Activated CD8-positive, alpha-beta T cell treated with anti-CD3 and anti-CD28 coated beads for 36 hours (primary cell): ENCODE measurements at regions of chrX and their contacts with region 1.

Region 1: GRCh38 chrX:47129157-47129898 is 15.2 kb downstream of the NDUFB11 start:
- DNase-seq: peak; percentile 93
- ATAC-seq: peak; percentile 99
- H3K4me3 Mint-ChIP-seq: peak overlapping the region; percentile 96
- H3K27ac Mint-ChIP-seq: peak overlapping the region; percentile 99
- H3K4me1 Mint-ChIP-seq: peaks cover 8% of the 10 kb centered on the region
- H3K27me3 Mint-ChIP-seq: no peaks in the 10 kb centered on the region
- CTCF ChIP-seq: no peak

Region 2: DNA sequence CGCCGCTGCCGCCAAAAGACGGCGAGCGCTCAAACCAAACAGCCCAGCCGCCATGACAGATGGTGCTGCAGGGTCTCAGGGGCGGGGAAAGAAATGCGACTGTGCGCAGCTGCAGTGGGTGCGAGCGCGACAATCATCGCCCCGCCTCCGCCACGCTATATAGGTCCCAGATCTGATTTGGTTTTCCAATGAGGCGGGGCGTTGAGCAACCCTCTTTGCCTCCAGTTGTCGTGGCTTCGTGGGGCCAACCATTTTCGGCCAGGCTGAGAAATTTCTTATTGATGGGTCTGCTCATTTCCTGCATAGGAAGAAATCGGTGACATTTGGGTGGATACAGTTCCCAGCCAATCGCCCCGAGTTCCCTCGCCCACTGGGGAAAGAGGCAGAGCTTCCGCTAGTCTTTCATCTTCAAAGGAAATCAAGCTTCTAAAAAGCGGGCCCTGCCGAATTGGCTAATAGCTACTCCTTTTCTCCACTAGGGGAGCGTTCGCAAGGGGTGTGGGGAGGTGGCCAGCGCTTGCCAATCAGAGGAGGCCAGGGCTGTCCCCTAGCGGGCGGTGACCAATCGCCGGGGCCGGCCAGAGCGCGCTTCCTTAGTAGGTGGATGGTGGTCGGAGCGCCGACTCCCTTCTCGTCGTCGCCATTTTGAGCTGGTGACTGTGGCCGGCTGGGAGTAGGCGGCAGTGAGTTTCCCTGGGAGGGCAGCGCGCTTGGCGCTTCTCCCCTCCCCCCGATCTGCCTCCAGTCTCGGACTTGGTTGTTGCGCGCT is 15.5 kb after region 1 on chrX and contains the starts of genes NDUFB11 and RBM10:
- CTCF ChIA-PET with region 1: interaction called, 11 read pairs
- POLR2A ChIA-PET with region 1: interaction called, 12 read pairs
- intact Hi-C with region 1: no loop called
- DNase-seq: peak; percentile 95
- ATAC-seq: peak; percentile 94
- H3K4me3 Mint-ChIP-seq: peak within 1 kb of the TSS; percentile 95
- H3K27ac Mint-ChIP-seq: peak within 1 kb of the TSS; percentile 99
- H3K4me1 Mint-ChIP-seq: peaks cover 28% of the 10 kb centered on the region
- H3K27me3 Mint-ChIP-seq: no peaks in the 10 kb centered on the region
- CTCF ChIP-seq: peak; percentile 56
- total RNA-seq, gene NDUFB11: 82.9 to 89.8 TPM
- total RNA-seq, gene RBM10: 66.4 to 66.7 TPM

Region 3: GRCh38 chrX:47200385-47201150 is 71.2 kb after region 1 on chrX:
- CTCF ChIA-PET with region 1: no interaction called
- POLR2A ChIA-PET with region 1: no interaction called
- intact Hi-C with region 1: no loop called
- DNase-seq: no peak
- ATAC-seq: no peak
- H3K4me3 Mint-ChIP-seq: no peak overlapping the region
- H3K27ac Mint-ChIP-seq: peak overlapping the region; percentile 70
- H3K4me1 Mint-ChIP-seq: peaks cover 19% of the 10 kb centered on the region
- H3K27me3 Mint-ChIP-seq: no peaks in the 10 kb centered on the region
- CTCF ChIP-seq: no peak

Region 4: GRCh38 chrX:47233337-47234113 is 104.2 kb after region 1 on chrX:
- CTCF ChIA-PET with region 1: no interaction called
- POLR2A ChIA-PET with region 1: no interaction called
- intact Hi-C with region 1: no loop called
- DNase-seq: peak; percentile 96
- ATAC-seq: peak; percentile 94
- H3K4me3 Mint-ChIP-seq: peak overlapping the region; percentile 89
- H3K27ac Mint-ChIP-seq: peak overlapping the region; percentile 97
- H3K4me1 Mint-ChIP-seq: peaks cover 26% of the 10 kb centered on the region
- H3K27me3 Mint-ChIP-seq: no peaks in the 10 kb centered on the region
- CTCF ChIP-seq: no peak